Heart left ventricle (tissue), 16 donors: ENCODE measurements at regions of chr2 and their contacts with region 1.

Region 1: GRCh38 chr2:226963528-226963927 is 127.7 kb downstream of the RHBDD1 start:
- DNase-seq: no peak
- ATAC-seq: peak in 1 of 4 donors; percentile 24
- H3K4me3 ChIP-seq: no peak overlapping the region
- H3K27ac ChIP-seq: no peak overlapping the region
- H3K4me1 ChIP-seq: peaks cover 0 to 4% (median 0%) of the 10 kb centered on the region in 12 donors
- H3K27me3 ChIP-seq: no peaks in the 10 kb centered on the region
- CTCF ChIP-seq: no peak
- POLR2A ChIP-seq: no peak

Region 2: DNA sequence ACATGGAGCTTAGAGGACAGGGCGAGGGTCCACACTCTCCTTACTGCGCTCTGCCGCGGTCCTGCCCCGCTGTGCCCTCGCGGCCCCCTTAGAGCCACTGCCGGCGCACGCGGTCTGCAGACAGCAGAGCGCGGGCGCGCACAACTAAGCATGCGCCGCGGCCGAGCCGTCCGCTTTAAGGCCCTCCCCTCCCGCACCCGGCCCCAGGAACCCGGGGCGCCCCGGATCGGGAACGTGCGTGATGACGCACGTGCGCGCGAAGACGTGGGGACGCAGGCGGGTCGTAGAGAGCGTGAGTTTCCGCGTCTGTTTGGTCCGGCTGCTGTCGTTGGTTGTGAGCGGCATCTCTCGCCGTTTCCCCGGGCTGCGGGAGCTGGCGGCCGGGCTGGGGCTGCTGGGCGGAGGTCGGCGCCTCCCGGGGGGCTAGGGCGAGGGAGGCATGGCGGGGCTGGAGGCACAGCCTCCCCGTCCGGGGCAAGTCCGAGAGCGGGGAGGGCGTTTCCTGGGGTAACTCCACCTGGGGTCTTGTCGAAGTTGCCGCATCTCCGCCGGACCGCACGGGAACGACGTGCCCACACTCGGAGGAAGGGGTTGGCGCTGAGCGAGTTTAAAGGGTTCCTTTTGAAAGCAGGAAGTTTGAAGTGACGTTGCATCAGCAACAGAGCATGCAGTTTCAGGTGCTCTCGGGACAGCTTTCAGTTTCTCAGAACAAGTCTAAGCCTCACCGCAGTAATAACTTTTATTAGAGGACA is 127.6 kb before region 1 on chr2 and contains the start of gene RHBDD1:
- intact Hi-C with region 1: loop called in 1 of 10 experiments (anchors 10 kb)
- DNase-seq: peak; percentile 95 to 97 (median 96)
- ATAC-seq: peak; percentile 100
- H3K4me3 ChIP-seq: peak within 1 kb of the TSS; percentile 74 to 94 (median 85)
- H3K27ac ChIP-seq: peak within 1 kb of the TSS; percentile 92 to 99 (median 98)
- H3K4me1 ChIP-seq: peaks cover 0 to 32% (median 20%) of the 10 kb centered on the region in 12 donors
- H3K27me3 ChIP-seq: no peaks in the 10 kb centered on the region
- CTCF ChIP-seq: no peak
- POLR2A ChIP-seq: peak; percentile 49 to 90
- total RNA-seq, gene RHBDD1: 12.5 to 44.5 (median 33.2) TPM

Region 3: DNA sequence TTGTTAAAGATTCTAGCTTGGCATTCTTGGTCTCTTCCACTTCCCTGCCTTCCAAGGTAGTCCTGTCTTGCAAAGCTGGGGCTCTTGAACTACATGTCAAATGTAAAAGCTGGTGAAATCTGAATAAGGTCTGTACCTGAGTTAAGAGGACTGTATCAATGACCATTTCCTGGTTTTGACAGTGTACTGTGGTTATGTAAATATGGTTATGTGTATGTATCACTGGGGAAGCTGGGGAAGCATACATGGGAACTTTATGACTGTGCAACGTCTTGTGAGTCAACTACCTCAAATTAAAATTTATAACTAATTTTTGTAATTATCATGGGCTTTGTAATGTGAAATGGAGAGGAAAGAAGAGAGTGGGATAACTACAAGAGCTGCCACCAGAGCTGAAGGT is 118.8 kb after region 1 on chr2:
- intact Hi-C with region 1: no loop called
- DNase-seq: no peak
- ATAC-seq: no peak
- H3K4me3 ChIP-seq: no peak overlapping the region
- H3K27ac ChIP-seq: no peak overlapping the region
- H3K4me1 ChIP-seq: no peaks in the 10 kb centered on the region
- H3K27me3 ChIP-seq: no peaks in the 10 kb centered on the region
- CTCF ChIP-seq: no peak
- POLR2A ChIP-seq: no peak

Region 4: GRCh38 chr2:227903381-227903780 is 939.9 kb after region 1 on chr2:
- intact Hi-C with region 1: no loop called
- DNase-seq: no peak
- ATAC-seq: no peak
- H3K4me3 ChIP-seq: no peak overlapping the region
- H3K27ac ChIP-seq: no peak overlapping the region
- H3K4me1 ChIP-seq: no peaks in the 10 kb centered on the region
- H3K27me3 ChIP-seq: peaks cover 0 to 4% (median 0%) of the 10 kb centered on the region in 9 donors
- CTCF ChIP-seq: no peak
- POLR2A ChIP-seq: no peak